H1 (cell line): ENCODE measurements at regions of chr2 and their contacts with region 1.

Region 1: GRCh38 chr2:218876562-218877219 is 4.0 kb upstream of the WNT10A start:
- DNase-seq: peak in 1 of 2 experiments; percentile 90
- H3K4me3 ChIP-seq: no peak overlapping the region
- H3K27ac ChIP-seq: no peak overlapping the region
- H3K4me1 ChIP-seq: peaks cover 0 to 42% (median 27%) of the 10 kb centered on the region in 4 experiments; a peak in 6 of 7 replicates
- H3K27me3 ChIP-seq: peaks cover 97 to 100% (median 99%) of the 10 kb centered on the region in 4 experiments
- CTCF ChIP-seq: peak in 2 of 3 experiments; percentile 94 to 96; a peak in 3 of 4 replicates
- EP300 ChIP-seq: no peak
- POLR2A ChIP-seq: no peak
- RAD21 ChIP-seq: peak; percentile 90 to 97

Region 2: DNA sequence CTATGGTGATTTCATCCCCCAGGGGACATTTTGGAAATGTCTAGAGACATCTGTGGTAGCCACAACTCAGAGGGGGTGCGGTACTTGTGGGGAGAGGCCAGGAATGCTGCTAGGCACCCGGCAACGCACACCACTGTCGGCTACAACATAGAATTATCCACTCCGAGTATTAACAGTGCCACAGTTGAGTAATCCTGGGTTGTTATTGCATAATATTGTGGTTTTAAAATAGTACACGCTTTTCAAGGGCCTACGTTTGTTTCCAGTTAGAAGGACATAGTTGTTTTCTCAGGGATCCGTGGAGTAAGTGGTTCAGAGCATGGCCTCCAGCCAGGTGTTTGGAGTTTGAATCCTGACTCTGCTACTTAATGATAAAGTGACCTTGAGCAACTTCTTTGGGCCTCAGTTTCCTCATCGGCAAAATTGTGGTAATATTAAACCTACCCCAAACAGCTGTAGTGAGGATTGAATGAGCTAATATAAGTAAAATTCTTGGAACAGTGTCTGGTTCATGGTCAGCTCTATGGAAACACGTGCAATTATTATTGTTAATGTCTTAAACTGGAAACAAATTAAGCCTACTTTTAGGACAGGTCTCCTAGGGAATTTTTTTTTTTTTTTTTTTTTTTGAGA is 70.2 kb before region 1 on chr2:
- CTCF ChIA-PET with region 1: no interaction called
- POLR2A ChIA-PET with region 1: no interaction called
- DNase-seq: no peak
- H3K4me3 ChIP-seq: no peak overlapping the region; a peak in 1 of 8 replicates
- H3K27ac ChIP-seq: no peak overlapping the region
- H3K4me1 ChIP-seq: peaks cover 0 to 5% (median 4%) of the 10 kb centered on the region in 4 experiments; a peak in 3 of 7 replicates
- H3K27me3 ChIP-seq: no peaks in the 10 kb centered on the region
- CTCF ChIP-seq: no peak
- EP300 ChIP-seq: no peak
- POLR2A ChIP-seq: no peak
- RAD21 ChIP-seq: no peak

Region 3: DNA sequence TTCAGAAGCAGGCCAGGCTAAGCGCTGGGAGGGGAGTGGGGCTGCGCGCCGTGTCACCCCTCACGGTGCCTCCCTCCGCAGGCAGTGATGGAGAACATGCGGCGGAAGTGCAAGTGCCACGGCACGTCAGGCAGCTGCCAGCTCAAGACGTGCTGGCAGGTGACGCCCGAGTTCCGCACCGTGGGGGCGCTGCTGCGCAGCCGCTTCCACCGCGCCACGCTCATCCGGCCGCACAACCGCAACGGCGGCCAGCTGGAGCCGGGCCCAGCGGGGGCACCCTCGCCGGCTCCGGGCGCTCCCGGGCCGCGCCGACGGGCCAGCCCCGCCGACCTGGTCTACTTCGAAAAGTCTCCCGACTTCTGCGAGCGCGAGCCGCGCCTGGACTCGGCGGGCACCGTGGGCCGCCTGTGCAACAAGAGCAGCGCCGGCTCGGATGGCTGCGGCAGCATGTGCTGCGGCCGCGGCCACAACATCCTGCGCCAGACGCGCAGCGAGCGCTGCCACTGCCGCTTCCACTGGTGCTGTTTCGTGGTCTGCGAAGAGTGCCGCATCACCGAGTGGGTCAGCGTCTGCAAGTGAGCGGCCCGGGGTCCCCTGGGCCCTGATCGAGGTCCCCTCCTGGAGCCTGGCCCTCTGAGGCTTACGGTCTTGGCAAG is 16.1 kb after region 1 on chr2:
- CTCF ChIA-PET with region 1: interaction called, 783 read pairs
- POLR2A ChIA-PET with region 1: interaction called, 6 read pairs
- DNase-seq: peak in 1 of 2 experiments; percentile 82
- H3K4me3 ChIP-seq: peak overlapping the region in 3 of 4 experiments; percentile 26 to 55 (median 32); a peak in 5 of 8 replicates
- H3K27ac ChIP-seq: no peak overlapping the region
- H3K4me1 ChIP-seq: peaks cover 3 to 46% (median 17%) of the 10 kb centered on the region in 4 experiments
- H3K27me3 ChIP-seq: peaks cover 80 to 95% (median 92%) of the 10 kb centered on the region in 4 experiments
- CTCF ChIP-seq: peak in 2 of 3 experiments; percentile 43 to 62; a peak in 2 of 4 replicates
- EP300 ChIP-seq: no peak
- POLR2A ChIP-seq: no peak
- RAD21 ChIP-seq: peak in 1 of 2 experiments; percentile 9; a peak in 1 of 4 replicates

Region 4: DNA sequence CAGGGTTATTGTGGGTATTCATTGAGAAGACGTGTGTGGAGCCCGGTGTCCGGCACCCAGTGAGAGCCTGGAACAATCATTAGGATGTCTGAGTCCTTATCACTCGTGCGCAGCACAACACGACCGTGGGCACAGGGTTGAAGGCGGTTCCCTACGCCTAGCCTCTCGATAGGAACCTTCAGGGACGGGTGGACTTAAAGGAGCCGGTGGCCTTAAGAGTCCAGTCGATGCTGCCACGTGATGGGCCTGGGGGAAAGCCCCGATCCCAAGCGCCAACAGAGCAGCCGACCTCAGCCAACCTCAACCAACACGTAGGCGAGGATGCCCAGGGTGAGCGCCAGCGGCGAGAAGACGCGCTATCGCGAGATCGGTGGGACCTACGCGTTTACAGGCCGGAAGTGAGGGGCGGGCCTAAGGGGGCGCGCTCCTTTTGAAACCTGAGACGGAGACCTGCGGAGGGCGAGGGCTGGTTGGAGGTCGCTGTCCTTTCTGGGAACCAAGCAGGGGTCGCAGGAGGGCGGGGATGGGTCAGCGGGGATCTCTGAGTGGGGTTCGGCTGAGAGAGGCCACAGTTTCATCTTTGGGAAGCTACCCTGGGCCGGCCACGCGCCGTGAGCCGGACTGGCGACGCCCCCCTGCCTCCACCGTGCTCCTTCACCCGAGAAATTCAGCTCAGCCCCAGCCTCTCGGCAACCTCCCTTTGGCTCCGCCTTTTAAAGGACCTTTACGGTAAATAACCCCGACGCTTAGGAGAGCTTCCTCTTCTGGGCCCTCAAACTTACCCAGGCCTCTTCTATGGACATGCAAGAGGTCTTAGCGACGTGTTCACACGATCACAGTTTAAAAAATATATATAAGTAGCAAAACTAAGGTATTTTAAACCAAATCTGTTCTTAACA is 32.3 kb after region 1 on chr2:
- CTCF ChIA-PET with region 1: interaction called, 14 read pairs
- POLR2A ChIA-PET with region 1: interaction called, 3 read pairs
- DNase-seq: peak; percentile 89 to 96
- H3K4me3 ChIP-seq: peak overlapping the region; percentile 75 to 90 (median 82)
- H3K27ac ChIP-seq: peak overlapping the region; percentile 73; the same call in 1 of the 2 replicates
- H3K4me1 ChIP-seq: peaks cover 0 to 4% (median 1%) of the 10 kb centered on the region in 4 experiments; a peak in 2 of 7 replicates
- H3K27me3 ChIP-seq: peaks cover 2 to 28% (median 17%) of the 10 kb centered on the region in 4 experiments; a peak in 6 of 7 replicates
- CTCF ChIP-seq: no peak
- EP300 ChIP-seq: no peak
- POLR2A ChIP-seq: peak; percentile 61 to 95
- RAD21 ChIP-seq: no peak

Region 5: GRCh38 chr2:218990052-218990451 is 113.4 kb after region 1 on chr2:
- CTCF ChIA-PET with region 1: interaction called, 92 read pairs
- POLR2A ChIA-PET with region 1: interaction called, 3 read pairs
- DNase-seq: no peak
- H3K4me3 ChIP-seq: no peak overlapping the region
- H3K27ac ChIP-seq: no peak overlapping the region
- H3K4me1 ChIP-seq: peaks cover 0 to 17% (median 6%) of the 10 kb centered on the region in 4 experiments; a peak in 6 of 7 replicates
- H3K27me3 ChIP-seq: peaks cover 98 to 100% (median 99%) of the 10 kb centered on the region in 4 experiments
- CTCF ChIP-seq: no peak
- EP300 ChIP-seq: no peak
- POLR2A ChIP-seq: no peak
- RAD21 ChIP-seq: no peak